RWPE1 (cell line): ENCODE measurements at regions of chr9 and their contacts with region 1.

Region 1: DNA sequence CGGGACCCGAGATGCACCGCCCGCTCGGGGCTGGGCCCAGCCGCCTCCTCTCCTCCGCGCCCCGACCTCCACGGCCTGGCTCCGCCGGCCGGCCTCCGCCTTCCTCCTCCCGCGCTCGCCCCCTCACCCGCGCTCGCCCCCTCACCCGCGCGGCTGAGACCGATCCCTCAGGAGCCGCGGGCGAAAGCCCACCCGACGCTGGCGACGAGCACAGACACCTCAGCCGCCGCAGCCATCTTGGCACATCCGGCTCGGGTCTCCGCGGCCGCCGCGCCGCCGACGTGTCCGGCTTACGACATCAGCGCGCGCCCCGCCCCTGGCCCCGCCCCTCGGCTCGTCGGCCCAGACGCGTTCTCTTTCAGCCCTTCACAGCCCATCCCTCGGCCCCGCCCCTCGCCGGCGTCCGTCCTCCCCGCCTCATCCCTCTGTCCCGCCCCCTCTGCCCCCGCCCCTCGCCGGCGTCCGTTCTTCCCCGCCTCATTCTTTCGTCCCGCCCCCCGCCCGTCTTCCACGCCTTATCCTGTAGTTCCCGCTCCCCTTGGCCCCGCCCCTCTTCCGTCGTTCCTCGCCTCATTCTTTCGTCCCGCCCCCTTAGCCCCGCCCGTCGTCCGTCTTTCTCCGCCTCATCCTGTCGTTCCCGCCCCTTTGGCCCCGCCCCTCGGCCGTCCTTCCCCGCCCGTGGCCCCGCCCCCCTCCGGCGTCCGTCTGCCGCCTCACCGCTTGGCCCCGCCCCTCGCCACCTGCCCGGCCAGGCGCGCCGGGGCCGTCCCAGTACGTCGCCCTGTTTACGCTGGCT is at the start of gene SEC16A:
- DNase-seq: peak; percentile 99
- H3K27ac ChIP-seq: peak within 1 kb of the TSS; percentile 98
- CTCF ChIP-seq: no peak

Region 2: GRCh38 chr9:136339173-136339957 is 143.6 kb before region 1 on chr9:
- CTCF ChIA-PET with region 1: no interaction called
- POLR2A ChIA-PET with region 1: no interaction called
- DNase-seq: peak; percentile 84
- H3K27ac ChIP-seq: peak overlapping the region; percentile 23
- CTCF ChIP-seq: peak; percentile 100

Region 3: DNA sequence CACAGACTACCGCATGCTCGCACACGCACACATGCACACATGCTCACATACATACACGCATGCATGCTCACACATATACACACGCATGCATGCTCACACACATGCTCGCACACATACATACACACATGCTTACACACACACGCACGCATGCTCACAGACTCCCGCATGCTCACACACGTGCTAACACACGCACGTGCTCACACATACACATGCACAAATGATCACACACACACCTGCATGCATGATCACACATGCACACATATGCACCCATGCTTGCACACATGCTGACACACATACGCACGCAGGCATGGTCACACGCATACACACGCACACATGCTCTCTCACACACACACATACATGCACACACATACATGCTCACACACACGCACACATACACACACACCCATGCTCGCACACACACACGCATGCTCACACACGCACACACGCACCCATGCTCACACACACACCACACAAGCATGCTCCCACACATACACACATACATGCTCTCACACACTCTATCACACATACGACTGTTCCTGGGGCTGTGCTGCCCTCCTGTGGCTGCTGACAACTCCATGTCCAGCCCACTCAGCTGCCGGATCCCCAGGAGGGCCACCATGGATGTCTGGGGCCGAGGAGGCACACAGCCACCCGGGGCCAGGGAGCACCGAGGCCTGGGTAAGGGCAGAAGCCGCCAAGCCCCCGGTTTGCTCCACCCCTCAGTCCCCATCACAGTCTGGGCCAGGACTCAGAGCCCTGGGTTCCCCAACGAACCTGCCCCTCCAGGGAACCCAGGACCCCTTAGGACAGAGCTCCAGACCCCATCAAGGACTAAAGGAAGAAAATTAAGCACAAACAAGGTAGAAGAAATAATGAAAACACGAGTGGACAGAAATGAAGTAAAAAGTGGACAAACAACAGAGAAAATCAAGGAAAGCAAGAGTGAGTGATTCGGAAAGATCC is 148.3 kb after region 1 on chr9:
- CTCF ChIA-PET with region 1: interaction called, 232 read pairs
- POLR2A ChIA-PET with region 1: interaction called, 4 read pairs
- DNase-seq: peak; percentile 74
- H3K27ac ChIP-seq: peak overlapping the region; percentile 100
- CTCF ChIP-seq: peak; percentile 99